ENCODE measurements at regions of chr1 and their contacts with region 1.

Region 1: DNA sequence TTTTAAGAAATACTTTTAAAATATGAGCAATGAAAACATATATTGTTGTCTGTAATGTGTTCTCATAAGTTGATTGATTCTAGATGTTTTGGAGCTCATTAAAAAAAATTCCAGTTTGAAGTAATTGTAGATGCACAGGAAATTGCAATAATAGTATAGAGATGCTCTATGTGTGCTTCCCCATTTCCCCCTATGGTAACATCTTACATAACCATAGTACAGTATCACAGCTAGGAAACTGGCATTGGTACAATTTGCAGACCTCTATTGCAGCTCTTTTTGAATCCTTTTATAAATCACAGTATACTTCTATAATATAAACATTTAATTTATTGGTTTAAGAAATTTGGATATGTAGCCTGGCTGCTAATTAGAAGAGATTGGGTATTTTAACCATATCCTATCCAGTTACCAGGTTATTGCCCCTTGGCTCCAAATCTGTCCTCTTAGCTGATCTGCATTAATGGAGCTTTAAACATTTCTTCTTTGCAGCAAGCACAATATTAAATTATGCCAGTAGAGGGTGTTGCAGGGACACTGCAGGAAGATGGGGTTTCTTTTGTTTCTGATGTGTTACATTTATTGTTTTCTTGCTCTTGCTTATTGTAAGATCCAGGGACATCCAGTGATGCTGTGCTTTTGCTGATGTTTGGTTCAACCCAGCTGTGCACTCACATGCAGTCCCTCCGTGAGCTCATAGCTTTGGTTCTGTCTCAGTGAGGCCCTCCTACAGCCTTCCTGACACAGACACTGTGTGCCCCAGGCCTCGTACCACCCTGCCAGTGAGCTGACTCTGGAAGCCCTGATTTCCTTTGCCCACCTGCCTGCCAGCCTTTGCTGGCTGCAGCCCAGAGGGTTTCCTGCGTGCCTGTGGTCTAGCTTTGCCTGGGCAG is 103.3 kb downstream of the RABGAP1L start:
- DNase-seq: peak in 2 of 9 experiments; percentile 33 to 52
- ATAC-seq: no peak
- H3K4me3 ChIP-seq: no peak overlapping the region
- H3K4me3 Mint-ChIP-seq: no peak overlapping the region
- H3K27ac ChIP-seq: no peak overlapping the region
- H3K27ac Mint-ChIP-seq: no peak overlapping the region
- H3K4me1 ChIP-seq: no peaks in the 10 kb centered on the region
- H3K4me1 Mint-ChIP-seq: no peaks in the 10 kb centered on the region
- H3K27me3 ChIP-seq: no peaks in the 10 kb centered on the region
- H3K27me3 Mint-ChIP-seq: no peaks in the 10 kb centered on the region
- CTCF ChIP-seq: peak; percentile 55

Region 2: DNA sequence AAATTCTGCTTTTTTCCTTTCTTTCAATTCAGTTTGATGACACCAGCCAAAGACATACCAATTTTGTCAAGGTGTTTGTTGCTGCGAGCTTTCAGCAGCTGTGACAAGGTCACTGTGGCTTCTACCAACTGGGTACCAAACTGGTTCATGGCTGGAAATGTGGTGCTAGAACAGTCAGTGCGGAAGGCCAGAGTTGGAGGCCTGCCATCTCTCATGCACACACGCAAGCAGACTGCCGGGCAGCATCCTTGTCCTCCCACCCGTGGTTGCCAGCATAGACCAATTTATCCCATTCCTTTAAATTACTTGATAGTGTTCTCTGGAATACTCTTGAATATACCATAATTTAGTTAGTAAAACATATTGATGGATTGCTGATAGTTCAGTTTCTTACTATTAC is 105.3 kb after region 1 on chr1:
- CTCF ChIA-PET with region 1: no interaction called
- POLR2A ChIA-PET with region 1: no interaction called
- intact Hi-C with region 1: no loop called
- DNase-seq: no peak
- ATAC-seq: no peak
- H3K4me3 ChIP-seq: no peak overlapping the region
- H3K4me3 Mint-ChIP-seq: no peak overlapping the region
- H3K27ac ChIP-seq: no peak overlapping the region
- H3K27ac Mint-ChIP-seq: no peak overlapping the region
- H3K4me1 ChIP-seq: no peaks in the 10 kb centered on the region
- H3K4me1 Mint-ChIP-seq: peaks cover 5% of the 10 kb centered on the region
- H3K27me3 ChIP-seq: no peaks in the 10 kb centered on the region
- H3K27me3 Mint-ChIP-seq: no peaks in the 10 kb centered on the region
- CTCF ChIP-seq: no peak

Region 3: GRCh38 chr1:174726167-174726879 is 463.7 kb after region 1 on chr1:
- CTCF ChIA-PET with region 1: interaction called, 5 read pairs
- POLR2A ChIA-PET with region 1: interaction called, 3 read pairs
- intact Hi-C with region 1: loop called in 1 of 2 experiments (anchors 2 kb)
- DNase-seq: peak in 2 of 9 experiments; percentile 15 to 20
- ATAC-seq: no peak
- H3K4me3 ChIP-seq: no peak overlapping the region
- H3K4me3 Mint-ChIP-seq: no peak overlapping the region
- H3K27ac ChIP-seq: no peak overlapping the region
- H3K27ac Mint-ChIP-seq: no peak overlapping the region
- H3K4me1 ChIP-seq: no peaks in the 10 kb centered on the region
- H3K4me1 Mint-ChIP-seq: no peaks in the 10 kb centered on the region
- H3K27me3 ChIP-seq: no peaks in the 10 kb centered on the region
- H3K27me3 Mint-ChIP-seq: no peaks in the 10 kb centered on the region
- CTCF ChIP-seq: peak; percentile 60

Region 4: DNA sequence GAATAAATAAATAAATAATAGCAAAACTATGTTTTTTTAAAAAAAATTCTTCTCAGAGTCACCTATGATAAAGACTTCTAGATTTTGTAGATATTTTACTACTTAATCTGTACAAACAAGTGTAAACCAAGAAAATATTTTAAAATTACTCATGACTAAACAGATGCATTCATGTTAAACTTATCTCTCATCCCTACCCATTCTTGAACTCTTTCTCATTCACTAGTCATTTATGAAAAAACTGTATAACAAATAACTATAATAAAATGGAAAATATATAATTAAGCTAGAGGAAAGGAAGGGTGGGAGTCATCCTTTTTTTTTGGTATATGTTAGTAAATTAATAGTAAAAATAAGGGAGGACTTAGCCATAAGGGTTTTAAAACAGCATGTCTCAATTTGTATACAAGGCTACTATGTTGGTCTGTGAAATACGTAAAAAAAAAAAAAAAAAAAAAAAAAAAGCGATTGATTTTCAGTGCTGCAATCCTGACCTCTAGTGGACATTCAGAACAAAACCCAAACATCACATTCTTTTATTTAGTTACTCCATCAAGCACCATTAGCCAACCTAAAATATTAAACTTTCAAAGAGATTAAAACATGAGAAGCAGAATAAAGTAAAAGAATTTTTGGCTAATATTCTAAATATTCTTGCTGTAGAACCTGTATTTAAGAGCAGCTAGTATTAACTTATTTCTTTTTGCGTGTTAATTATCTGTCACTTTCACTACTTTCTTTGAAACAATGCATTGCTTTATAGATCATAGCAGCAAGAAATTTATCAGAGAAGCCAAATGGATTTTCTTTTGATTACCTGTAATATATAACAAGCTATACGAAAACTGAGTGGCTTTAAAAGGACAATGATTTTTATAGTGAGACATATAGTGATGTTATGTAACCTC is 481.3 kb after region 1 on chr1:
- CTCF ChIA-PET with region 1: interaction called, 23 read pairs
- POLR2A ChIA-PET with region 1: no interaction called
- intact Hi-C with region 1: loop called (anchors 1 kb)
- DNase-seq: peak in 2 of 9 experiments; percentile 64 to 74
- ATAC-seq: peak; percentile 29
- H3K4me3 ChIP-seq: no peak overlapping the region
- H3K4me3 Mint-ChIP-seq: no peak overlapping the region
- H3K27ac ChIP-seq: no peak overlapping the region
- H3K27ac Mint-ChIP-seq: no peak overlapping the region
- H3K4me1 ChIP-seq: no peaks in the 10 kb centered on the region
- H3K4me1 Mint-ChIP-seq: peaks cover 9% of the 10 kb centered on the region
- H3K27me3 ChIP-seq: no peaks in the 10 kb centered on the region
- H3K27me3 Mint-ChIP-seq: no peaks in the 10 kb centered on the region
- CTCF ChIP-seq: peak; percentile 66

Measured in CD8-positive, alpha-beta T cell (primary cell).